Activated naive CD8-positive, alpha-beta T cell treated with anti-CD3 and anti-CD28 coated beads, Interleukin-2, amount 10 ng/mL, durations not matched to agents 7 days and 5 days (primary cell): ENCODE measurements at regions of chr17 and their contacts with region 1.

Region 1: DNA sequence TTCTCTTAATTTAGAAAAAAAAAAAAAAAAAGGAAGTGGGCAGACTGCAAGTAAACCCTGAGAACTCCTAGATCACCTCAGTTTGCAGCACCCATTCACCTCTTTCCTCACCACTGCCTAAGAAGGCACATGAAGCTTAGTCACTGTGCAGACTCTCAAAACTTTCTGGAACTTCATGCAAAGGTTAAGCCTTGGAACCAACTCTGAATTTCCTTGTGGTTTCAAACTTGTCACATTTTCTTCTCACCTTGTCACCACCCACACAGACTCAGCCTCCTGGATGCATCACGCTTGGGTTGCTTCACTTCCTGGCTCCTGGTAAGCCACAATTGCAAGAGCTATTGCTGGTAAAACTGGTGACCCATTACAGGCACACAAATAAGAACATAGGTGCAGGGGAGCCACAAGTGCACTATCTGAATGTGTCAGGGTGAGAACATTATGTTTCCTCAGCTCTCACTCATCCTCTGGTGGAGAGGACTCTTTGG is 15.0 kb upstream of the CPD start:
- DNase-seq: peak; percentile 61
- ATAC-seq: peak; percentile 90
- H3K4me3 Mint-ChIP-seq: no peak overlapping the region
- H3K27ac Mint-ChIP-seq: peak overlapping the region; percentile 91
- H3K4me1 Mint-ChIP-seq: peaks cover 22% of the 10 kb centered on the region
- H3K27me3 Mint-ChIP-seq: no peaks in the 10 kb centered on the region

Region 2: DNA sequence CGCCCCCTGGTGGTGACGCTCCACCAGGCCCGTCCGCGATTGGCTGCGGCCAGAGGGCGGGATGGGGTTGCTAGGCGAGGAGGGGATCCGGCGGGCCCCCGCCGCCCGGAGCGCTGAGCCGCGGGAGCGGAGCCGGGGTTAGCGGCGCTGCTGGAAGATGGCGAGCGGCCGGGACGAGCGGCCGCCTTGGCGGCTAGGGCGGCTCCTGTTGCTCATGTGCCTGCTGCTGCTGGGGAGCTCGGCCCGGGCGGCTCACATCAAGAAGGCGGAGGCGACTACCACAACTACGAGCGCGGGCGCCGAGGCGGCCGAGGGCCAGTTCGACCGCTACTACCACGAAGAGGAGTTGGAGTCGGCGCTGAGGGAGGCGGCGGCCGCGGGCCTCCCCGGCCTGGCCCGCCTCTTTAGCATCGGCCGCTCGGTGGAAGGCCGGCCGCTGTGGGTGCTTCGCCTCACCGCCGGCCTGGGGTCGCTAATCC is 15.1 kb after region 1 on chr17 and contains the start of gene CPD:
- POLR2A ChIA-PET with region 1: interaction called, 12 read pairs
- DNase-seq: peak; percentile 98
- ATAC-seq: peak; percentile 96
- H3K4me3 Mint-ChIP-seq: peak within 1 kb of the TSS; percentile 98
- H3K27ac Mint-ChIP-seq: peak within 1 kb of the TSS; percentile 95
- H3K4me1 Mint-ChIP-seq: peaks cover 49% of the 10 kb centered on the region
- H3K27me3 Mint-ChIP-seq: peaks cover 2% of the 10 kb centered on the region
- total RNA-seq, gene CPD: 18.6 to 23.3 TPM